ENCODE measurements at regions of chr20 and their contacts with region 1.

Region 1: GRCh38 chr20:13819885-13820645 is 35.2 kb downstream of the NDUFAF5 start:
- DNase-seq: no peak

Region 2: GRCh38 chr20:13953227-13953626 is 133.2 kb after region 1 on chr20:
- intact Hi-C with region 1: loop called (anchors 10 kb)
- DNase-seq: no peak

Region 3: GRCh38 chr20:14051454-14051853 is 231.4 kb after region 1 on chr20:
- intact Hi-C with region 1: loop called (anchors 5 kb)
- DNase-seq: no peak